ENCODE measurements at regions of chr6 and their contacts with region 1.

Region 1: DNA sequence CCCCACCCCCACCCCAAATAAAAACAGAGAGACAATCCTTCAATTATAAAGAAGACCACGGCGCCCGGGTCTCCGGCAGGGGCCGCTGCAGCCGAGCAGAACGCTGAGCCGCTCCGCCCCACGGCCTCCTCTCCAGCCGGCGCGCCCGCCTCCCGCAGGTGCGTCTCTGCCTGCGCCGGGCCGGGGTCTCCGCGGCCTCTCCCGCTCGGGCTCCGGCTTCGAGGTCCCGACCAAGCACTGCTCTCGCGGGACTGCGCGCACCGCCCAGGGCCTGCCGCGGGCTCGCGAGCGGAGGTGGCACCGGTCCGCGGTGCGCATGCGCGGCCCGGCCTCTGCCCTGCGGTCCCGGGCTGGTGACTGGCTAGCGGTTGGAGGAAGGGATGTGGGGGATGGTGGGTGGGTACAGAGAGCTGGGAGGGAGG is 241 bp upstream of the SIRT5 start:
- DNase-seq: peak; percentile 87 to 98
- ATAC-seq: peak; percentile 79 to 93 (median 84)
- H3K4me3 ChIP-seq: peak overlapping the region; percentile 83
- H3K4me3 Mint-ChIP-seq: peak overlapping the region; percentile 96
- H3K27ac ChIP-seq: peak overlapping the region; percentile 87
- H3K27ac Mint-ChIP-seq: peak overlapping the region; percentile 92 to 96
- H3K4me1 ChIP-seq: peaks cover 11% of the 10 kb centered on the region
- H3K4me1 Mint-ChIP-seq: peaks cover 16 to 25% of the 10 kb centered on the region in 2 donors
- H3K27me3 ChIP-seq: no peaks in the 10 kb centered on the region
- H3K27me3 Mint-ChIP-seq: no peaks in the 10 kb centered on the region
- CTCF ChIP-seq: peak; percentile 70

Region 2: GRCh38 chr6:13248053-13248452 is 326.1 kb before region 1 on chr6:
- intact Hi-C with region 1: no loop called
- DNase-seq: no peak
- ATAC-seq: no peak
- H3K4me3 ChIP-seq: no peak overlapping the region
- H3K4me3 Mint-ChIP-seq: no peak overlapping the region
- H3K27ac ChIP-seq: no peak overlapping the region
- H3K27ac Mint-ChIP-seq: no peak overlapping the region
- H3K4me1 ChIP-seq: no peaks in the 10 kb centered on the region
- H3K4me1 Mint-ChIP-seq: no peaks in the 10 kb centered on the region
- H3K27me3 ChIP-seq: no peaks in the 10 kb centered on the region
- H3K27me3 Mint-ChIP-seq: peaks cover 12 to 31% of the 10 kb centered on the region in 2 donors
- CTCF ChIP-seq: no peak

Region 3: GRCh38 chr6:13328076-13328874 is 245.9 kb before region 1 on chr6 and contains the start of gene TBC1D7:
- intact Hi-C with region 1: loop called (anchors 2 kb)
- DNase-seq: peak; percentile 94 to 95
- ATAC-seq: peak; percentile 89 to 95 (median 90)
- H3K4me3 ChIP-seq: peak within 1 kb of the TSS; percentile 74
- H3K4me3 Mint-ChIP-seq: peak within 1 kb of the TSS; percentile 92
- H3K27ac ChIP-seq: peak within 1 kb of the TSS; percentile 90
- H3K27ac Mint-ChIP-seq: peak within 1 kb of the TSS; percentile 93 to 95
- H3K4me1 ChIP-seq: peaks cover 8% of the 10 kb centered on the region
- H3K4me1 Mint-ChIP-seq: peaks cover 14 to 20% of the 10 kb centered on the region in 2 donors
- H3K27me3 ChIP-seq: no peaks in the 10 kb centered on the region
- H3K27me3 Mint-ChIP-seq: no peaks in the 10 kb centered on the region
- CTCF ChIP-seq: no peak
- total RNA-seq, gene TBC1D7: 20.1 to 29.7 (median 24.3) TPM

Region 4: GRCh38 chr6:13336553-13336952 is 237.6 kb before region 1 on chr6:
- intact Hi-C with region 1: loop called (anchors 1 kb)
- DNase-seq: peak; percentile 77 to 86
- ATAC-seq: peak; percentile 81 to 88 (median 87)
- H3K4me3 ChIP-seq: no peak overlapping the region
- H3K4me3 Mint-ChIP-seq: peak overlapping the region; percentile 1
- H3K27ac ChIP-seq: no peak overlapping the region
- H3K27ac Mint-ChIP-seq: peak overlapping the region; percentile 6 to 46
- H3K4me1 ChIP-seq: peaks cover 24% of the 10 kb centered on the region
- H3K4me1 Mint-ChIP-seq: peaks cover 23 to 25% of the 10 kb centered on the region in 2 donors
- H3K27me3 ChIP-seq: no peaks in the 10 kb centered on the region
- H3K27me3 Mint-ChIP-seq: no peaks in the 10 kb centered on the region
- CTCF ChIP-seq: peak; percentile 97

Region 5: DNA sequence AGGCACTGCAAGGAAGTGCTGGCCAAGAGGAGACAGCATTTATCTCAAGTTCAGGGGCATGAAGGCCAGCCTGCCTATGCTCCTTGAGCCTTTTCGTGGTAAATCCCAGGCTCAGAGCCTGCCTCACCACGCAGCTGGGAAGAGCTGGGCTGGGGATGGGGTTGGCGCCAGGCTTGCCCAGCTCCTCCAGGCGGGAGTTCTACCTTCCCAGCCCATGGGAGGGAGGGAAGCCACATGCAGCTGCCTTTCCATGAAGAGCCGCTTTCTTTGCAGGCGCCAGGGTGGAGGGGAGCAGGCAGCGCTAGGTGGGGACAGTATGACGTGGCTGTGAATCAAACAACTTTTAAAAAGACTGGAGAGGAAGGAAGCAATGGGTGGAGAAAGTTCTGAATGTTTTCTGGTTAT is 19.2 kb before region 1 on chr6:
- intact Hi-C with region 1: no loop called
- DNase-seq: no peak
- ATAC-seq: no peak
- H3K4me3 ChIP-seq: no peak overlapping the region
- H3K4me3 Mint-ChIP-seq: no peak overlapping the region
- H3K27ac ChIP-seq: no peak overlapping the region
- H3K27ac Mint-ChIP-seq: no peak overlapping the region
- H3K4me1 ChIP-seq: no peaks in the 10 kb centered on the region
- H3K4me1 Mint-ChIP-seq: no peaks in the 10 kb centered on the region
- H3K27me3 ChIP-seq: no peaks in the 10 kb centered on the region
- H3K27me3 Mint-ChIP-seq: peaks cover 6 to 16% of the 10 kb centered on the region in 2 donors
- CTCF ChIP-seq: no peak

Region 6: DNA sequence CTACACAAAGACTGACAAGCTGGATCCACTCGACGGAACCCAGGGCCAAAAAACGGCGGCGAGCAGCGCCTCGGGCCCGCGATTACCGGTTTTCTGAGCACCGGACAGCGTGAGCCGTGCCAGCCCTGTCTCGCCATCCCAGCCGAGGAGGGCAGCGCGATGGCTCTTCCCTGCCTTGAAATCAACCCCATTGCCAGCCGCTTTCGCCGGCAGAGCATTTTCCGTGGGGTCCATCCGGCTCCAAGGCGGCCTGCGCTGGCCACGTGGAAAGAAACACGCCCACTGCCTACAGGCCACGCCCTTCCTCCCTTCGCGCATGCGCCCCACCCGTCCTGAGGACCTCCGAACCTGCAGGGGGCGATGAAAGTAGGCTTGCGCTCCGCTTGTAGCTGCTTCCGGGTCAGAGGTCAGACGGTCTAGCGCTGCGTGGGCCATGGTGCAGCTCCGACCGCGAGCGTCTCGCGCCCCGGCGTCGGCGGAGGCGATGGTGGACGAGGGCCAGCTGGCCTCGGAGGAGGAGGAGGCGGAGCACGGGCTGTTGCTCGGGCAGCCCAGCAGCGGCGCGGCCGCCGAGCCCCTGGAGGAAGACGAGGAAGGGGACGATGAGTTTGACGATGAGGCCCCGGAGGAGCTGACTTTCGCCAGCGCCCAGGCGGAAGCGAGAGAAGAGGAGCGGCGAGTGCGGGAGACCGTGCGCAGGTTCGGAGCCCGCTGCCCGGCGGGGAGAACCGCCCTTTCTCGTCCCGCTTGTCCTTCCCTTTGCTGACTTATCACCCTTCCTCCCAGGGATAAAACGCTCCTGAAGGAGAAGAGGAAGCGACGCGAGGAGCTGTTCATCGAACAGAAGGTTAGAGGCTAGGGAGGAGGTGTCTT is 41.0 kb after region 1 on chr6 and contains the start of gene NOL7:
- intact Hi-C with region 1: loop called (anchors 1 kb)
- DNase-seq: peak; percentile 100
- ATAC-seq: peak; percentile 93 to 99 (median 94)
- H3K4me3 ChIP-seq: peak within 1 kb of the TSS; percentile 91
- H3K4me3 Mint-ChIP-seq: peak within 1 kb of the TSS; percentile 99
- H3K27ac ChIP-seq: peak within 1 kb of the TSS; percentile 76
- H3K27ac Mint-ChIP-seq: peak within 1 kb of the TSS; percentile 94 to 99
- H3K4me1 ChIP-seq: peaks cover 17% of the 10 kb centered on the region
- H3K4me1 Mint-ChIP-seq: peaks cover 35 to 37% of the 10 kb centered on the region in 2 donors
- H3K27me3 ChIP-seq: no peaks in the 10 kb centered on the region
- H3K27me3 Mint-ChIP-seq: no peaks in the 10 kb centered on the region
- CTCF ChIP-seq: peak; percentile 82
- total RNA-seq, gene NOL7: 24.7 to 31.3 (median 29.6) TPM

Region 7: DNA sequence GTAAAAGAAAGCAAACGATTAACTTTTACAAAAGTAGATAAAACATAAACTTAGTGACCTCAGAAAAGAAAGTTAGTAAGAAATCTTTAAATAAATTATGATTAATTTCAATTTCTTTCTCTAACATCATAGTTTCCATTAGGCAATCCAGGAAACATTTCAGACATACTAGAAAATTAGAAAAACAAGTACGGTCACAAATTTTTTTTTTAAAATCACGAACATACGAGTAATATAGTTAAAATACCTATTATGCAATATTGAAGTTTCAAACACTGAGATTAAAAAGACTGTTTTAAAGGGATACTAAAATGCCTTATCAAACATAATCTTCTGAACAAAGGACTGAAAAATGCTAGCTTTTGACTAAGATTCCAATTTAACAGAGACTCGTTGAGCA is 67.2 kb after region 1 on chr6:
- intact Hi-C with region 1: no loop called
- DNase-seq: no peak
- ATAC-seq: no peak
- H3K4me3 ChIP-seq: no peak overlapping the region
- H3K4me3 Mint-ChIP-seq: no peak overlapping the region
- H3K27ac ChIP-seq: no peak overlapping the region
- H3K27ac Mint-ChIP-seq: no peak overlapping the region
- H3K4me1 ChIP-seq: no peaks in the 10 kb centered on the region
- H3K4me1 Mint-ChIP-seq: peaks cover 0 to 15% of the 10 kb centered on the region in 2 donors
- H3K27me3 ChIP-seq: no peaks in the 10 kb centered on the region
- H3K27me3 Mint-ChIP-seq: no peaks in the 10 kb centered on the region
- CTCF ChIP-seq: no peak

Region 8: GRCh38 chr6:13711733-13712598 is 137.8 kb after region 1 on chr6 and contains the start of gene RANBP9:
- intact Hi-C with region 1: loop called (anchors 1 kb)
- DNase-seq: peak; percentile 87 to 94
- ATAC-seq: peak; percentile 83 to 94 (median 85)
- H3K4me3 ChIP-seq: peak within 1 kb of the TSS; percentile 80
- H3K4me3 Mint-ChIP-seq: peak within 1 kb of the TSS; percentile 98
- H3K27ac ChIP-seq: peak within 1 kb of the TSS; percentile 91
- H3K27ac Mint-ChIP-seq: peak within 1 kb of the TSS; percentile 87 to 97
- H3K4me1 ChIP-seq: peaks cover 20% of the 10 kb centered on the region
- H3K4me1 Mint-ChIP-seq: peaks cover 46 to 47% of the 10 kb centered on the region in 2 donors
- H3K27me3 ChIP-seq: no peaks in the 10 kb centered on the region
- H3K27me3 Mint-ChIP-seq: no peaks in the 10 kb centered on the region
- CTCF ChIP-seq: no peak
- total RNA-seq, gene RANBP9: 52.2 to 62.5 (median 57.6) TPM

Region 9: GRCh38 chr6:13767121-13767808 is 193.1 kb after region 1 on chr6:
- intact Hi-C with region 1: loop called (anchors 10 kb)
- DNase-seq: peak in 1 of 2 donors; percentile 72
- ATAC-seq: peak; percentile 73 to 83 (median 80)
- H3K4me3 ChIP-seq: no peak overlapping the region
- H3K4me3 Mint-ChIP-seq: peak overlapping the region; percentile 72
- H3K27ac ChIP-seq: no peak overlapping the region
- H3K27ac Mint-ChIP-seq: peak overlapping the region; percentile 15 to 65
- H3K4me1 ChIP-seq: peaks cover 18% of the 10 kb centered on the region
- H3K4me1 Mint-ChIP-seq: peaks cover 21 to 29% of the 10 kb centered on the region in 2 donors
- H3K27me3 ChIP-seq: no peaks in the 10 kb centered on the region
- H3K27me3 Mint-ChIP-seq: peaks cover 9 to 12% of the 10 kb centered on the region in 2 donors
- CTCF ChIP-seq: no peak

Region 10: GRCh38 chr6:13846841-13847240 is 272.7 kb after region 1 on chr6:
- intact Hi-C with region 1: no loop called
- DNase-seq: no peak
- ATAC-seq: no peak
- H3K4me3 ChIP-seq: no peak overlapping the region
- H3K4me3 Mint-ChIP-seq: no peak overlapping the region
- H3K27ac ChIP-seq: no peak overlapping the region
- H3K27ac Mint-ChIP-seq: no peak overlapping the region
- H3K4me1 ChIP-seq: no peaks in the 10 kb centered on the region
- H3K4me1 Mint-ChIP-seq: no peaks in the 10 kb centered on the region
- H3K27me3 ChIP-seq: no peaks in the 10 kb centered on the region
- H3K27me3 Mint-ChIP-seq: peaks cover 10 to 16% of the 10 kb centered on the region in 2 donors
- CTCF ChIP-seq: no peak

Measured in natural killer cell (primary cell).